Sigmoid colon (tissue), 7 donors: ENCODE measurements at regions of chr16 and their contacts with region 1.

Region 1: GRCh38 chr16:89749647-89750046 is 28.3 kb downstream of the ZNF276 start:
- DNase-seq: no peak
- H3K4me3 ChIP-seq: no peak overlapping the region
- H3K27ac ChIP-seq: no peak overlapping the region
- H3K4me1 ChIP-seq: no peaks in the 10 kb centered on the region
- H3K27me3 ChIP-seq: no peaks in the 10 kb centered on the region
- CTCF ChIP-seq: no peak
- EP300 ChIP-seq: no peak
- POLR2A ChIP-seq: no peak

Region 2: DNA sequence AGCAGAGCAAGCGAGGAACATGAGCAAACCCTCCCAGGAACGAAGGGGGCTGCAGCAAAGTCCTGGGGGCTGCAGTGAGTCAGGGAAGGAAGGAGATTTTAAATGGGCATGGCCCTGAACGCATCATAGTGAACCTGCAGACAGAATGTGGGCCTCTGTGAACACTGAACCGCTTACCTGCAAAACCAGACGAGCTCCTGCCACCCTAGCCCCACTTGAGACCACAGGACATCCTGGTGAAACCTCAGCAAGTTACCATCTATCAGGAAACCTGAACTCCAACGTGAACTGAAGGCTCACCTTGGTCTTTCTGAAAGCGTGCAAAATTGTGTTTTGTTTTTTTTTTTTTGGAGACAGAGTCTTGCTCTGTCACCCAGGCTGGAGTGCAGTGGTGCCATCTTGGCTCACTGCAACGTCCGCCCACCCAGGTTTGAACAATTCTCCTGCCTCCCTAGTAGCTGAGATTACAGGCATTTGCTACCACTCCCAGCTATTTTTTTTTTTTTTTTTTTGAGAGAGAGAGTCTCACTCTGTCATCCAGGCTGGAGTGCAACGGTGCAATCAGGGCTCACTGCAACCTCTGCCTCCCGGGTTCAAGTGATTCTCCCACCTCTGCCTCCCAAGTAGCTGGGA is 36.0 kb after region 1 on chr16:
- intact Hi-C with region 1: no loop called
- DNase-seq: no peak
- H3K4me3 ChIP-seq: no peak overlapping the region
- H3K27ac ChIP-seq: no peak overlapping the region
- H3K4me1 ChIP-seq: no peaks in the 10 kb centered on the region
- H3K27me3 ChIP-seq: no peaks in the 10 kb centered on the region
- CTCF ChIP-seq: no peak
- EP300 ChIP-seq: no peak
- POLR2A ChIP-seq: no peak

Region 3: DNA sequence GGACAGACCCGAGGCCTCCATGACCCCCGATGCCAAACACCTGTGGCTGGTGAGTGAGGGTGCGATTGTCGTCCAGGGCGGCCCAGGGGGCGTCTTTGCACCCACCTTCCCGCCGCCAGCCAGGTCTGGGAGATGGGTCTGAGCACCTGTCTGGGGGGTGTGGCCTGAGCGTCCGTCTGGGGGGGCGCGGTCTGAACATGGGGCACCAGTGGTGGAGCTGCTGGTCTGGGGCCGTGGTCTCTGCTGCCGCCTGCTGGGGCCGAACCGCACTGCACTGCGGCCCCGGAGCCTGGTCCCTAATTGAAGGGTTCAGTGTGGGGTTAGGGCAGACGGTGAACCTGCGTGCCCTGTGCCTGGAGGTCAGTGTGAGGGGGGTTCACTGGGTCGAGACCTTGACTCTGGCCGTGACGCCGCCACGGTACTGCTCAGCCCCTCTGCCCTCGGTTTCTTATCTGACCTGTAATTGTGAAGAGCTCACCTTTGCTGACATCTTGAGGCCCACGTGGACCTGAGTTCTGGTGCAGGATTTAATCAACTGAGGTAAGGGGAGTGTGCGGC is 111.2 kb after region 1 on chr16:
- intact Hi-C with region 1: loop called (anchors 2 kb)
- DNase-seq: no peak
- H3K4me3 ChIP-seq: no peak overlapping the region
- H3K27ac ChIP-seq: no peak overlapping the region
- H3K4me1 ChIP-seq: no peaks in the 10 kb centered on the region
- H3K27me3 ChIP-seq: no peaks in the 10 kb centered on the region
- CTCF ChIP-seq: peak; percentile 90 to 98 (median 94)
- EP300 ChIP-seq: no peak
- POLR2A ChIP-seq: no peak